AG04449 (cell line): ENCODE measurements at regions of chr17 and their contacts with region 1.

Region 1: DNA sequence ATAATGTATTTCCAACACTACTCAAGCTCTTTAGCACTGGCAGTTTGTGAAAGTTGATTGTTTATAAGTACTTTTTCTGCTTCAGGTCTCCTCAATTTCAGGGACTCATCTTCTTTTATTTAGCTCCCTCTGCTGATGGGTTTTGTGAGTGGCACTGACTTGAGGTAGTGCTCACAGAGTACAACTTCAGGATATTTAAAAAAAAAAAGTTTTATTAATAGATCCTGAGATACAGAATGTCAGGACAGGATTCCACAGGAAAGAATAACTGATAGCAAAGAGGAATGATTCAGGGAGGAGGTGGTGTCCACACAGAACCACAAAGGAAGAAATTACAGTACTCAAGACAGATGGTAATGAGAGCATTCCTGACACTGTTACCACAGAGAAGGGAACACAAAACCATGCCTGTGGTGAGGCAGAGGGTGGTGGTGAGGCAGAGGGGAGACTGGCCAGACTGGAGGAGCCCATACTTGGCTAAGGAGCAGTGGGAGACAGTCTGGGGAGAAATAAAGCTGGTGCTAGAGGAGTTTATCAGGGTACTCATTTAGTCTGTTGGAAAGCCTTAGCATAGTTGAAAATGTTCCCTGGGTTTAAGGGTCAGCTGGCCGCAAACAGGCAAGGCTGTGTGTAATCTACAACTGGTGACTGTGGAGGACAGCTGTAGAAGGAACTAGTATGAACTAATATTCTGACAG is 63.7 kb downstream of the SPAG9 start:
- DNase-seq: peak; percentile 91
- H3K4me3 ChIP-seq: no peak overlapping the region
- CTCF ChIP-seq: peak; percentile 49

Region 2: DNA sequence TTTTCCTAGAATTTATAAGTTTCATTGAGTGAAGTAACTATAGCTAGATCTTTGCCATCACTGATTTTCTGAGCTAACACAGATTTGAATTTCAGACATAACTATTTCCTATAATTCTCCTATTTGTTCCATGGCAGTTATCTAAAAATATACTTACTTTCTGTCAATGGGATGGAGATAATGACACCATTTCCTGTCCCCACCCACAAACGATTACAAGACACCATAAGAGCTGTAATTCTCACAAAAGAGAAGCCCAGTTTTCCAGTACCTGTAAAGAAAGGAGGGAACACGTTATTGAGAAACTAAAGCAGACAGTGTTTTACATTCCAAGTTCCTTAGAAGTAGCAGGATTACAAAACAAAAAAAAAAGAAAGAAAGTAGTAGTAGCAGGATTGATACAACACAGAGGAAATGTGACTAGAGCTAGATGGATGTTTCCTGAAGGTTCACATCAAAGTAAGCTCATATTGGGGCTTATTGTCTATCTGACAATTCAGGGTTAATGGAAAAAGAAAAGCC is 80.0 kb before region 1 on chr17:
- CTCF ChIA-PET with region 1: no interaction called
- POLR2A ChIA-PET with region 1: no interaction called
- DNase-seq: no peak
- H3K4me3 ChIP-seq: no peak overlapping the region
- CTCF ChIP-seq: no peak

Region 3: GRCh38 chr17:51029568-51030463 is 27.1 kb before region 1 on chr17:
- CTCF ChIA-PET with region 1: interaction called, 17 read pairs
- POLR2A ChIA-PET with region 1: interaction called, 3 read pairs
- DNase-seq: no peak
- H3K4me3 ChIP-seq: no peak overlapping the region
- CTCF ChIP-seq: no peak

Region 4: DNA sequence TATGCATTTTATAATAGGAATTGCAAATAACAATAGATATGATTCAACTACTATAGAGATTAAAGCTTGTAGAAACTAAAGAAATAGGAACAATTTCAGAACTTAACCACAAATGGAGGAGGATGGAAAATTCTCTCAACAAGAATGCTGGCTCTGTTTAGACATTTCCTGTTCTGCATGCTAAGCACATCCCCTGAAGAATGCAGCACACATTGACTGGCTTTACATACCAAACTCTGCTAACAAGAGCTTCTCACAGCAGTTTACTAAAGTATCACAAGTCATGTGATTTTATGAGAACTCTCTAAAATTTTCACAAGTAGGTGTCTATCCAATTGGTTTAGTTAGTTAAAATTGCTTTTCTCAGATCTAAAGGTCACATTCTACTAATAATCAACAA is 21.5 kb before region 1 on chr17:
- CTCF ChIA-PET with region 1: interaction called, 95 read pairs
- POLR2A ChIA-PET with region 1: interaction called, 3 read pairs
- DNase-seq: peak; percentile 92
- H3K4me3 ChIP-seq: no peak overlapping the region
- CTCF ChIP-seq: no peak

Region 5: DNA sequence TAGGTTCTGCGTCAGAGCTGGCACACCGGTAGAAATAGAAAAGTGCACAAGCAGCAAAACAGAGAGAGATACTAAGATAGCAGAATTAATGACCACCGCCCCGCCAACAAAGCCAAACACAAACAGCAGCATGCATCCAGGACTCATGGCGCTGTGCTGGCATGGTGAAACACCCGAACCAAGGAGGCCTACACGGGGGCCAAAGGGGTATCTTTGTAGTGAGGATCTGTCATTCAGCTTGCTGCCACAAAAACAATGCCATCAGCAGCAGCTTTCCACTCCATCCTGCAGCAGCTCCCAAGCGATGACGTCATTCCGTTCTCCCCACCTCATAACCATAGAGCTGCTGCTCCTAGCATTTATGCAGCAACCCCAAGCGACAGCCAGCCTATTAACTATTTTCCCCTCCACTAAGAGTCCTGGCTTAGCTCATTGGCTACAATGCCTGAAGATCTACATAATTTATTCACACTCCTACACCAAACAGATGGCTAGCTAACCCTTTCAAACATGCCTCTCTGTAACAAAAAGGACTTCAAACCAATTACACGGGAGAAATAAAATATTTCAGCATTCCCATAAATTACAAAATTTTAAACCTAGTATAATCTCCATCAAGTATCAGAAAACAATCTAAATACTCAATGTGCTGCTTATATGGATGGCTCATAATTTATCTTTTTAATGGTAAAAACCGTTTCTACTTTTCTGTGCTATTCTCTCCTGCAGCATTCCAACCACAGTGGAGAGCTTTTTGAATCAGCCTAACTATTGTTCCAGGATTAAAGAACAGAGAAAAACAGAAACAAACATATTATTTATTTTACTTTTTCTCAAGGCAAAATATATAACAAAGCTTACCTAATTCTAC is 10.2 kb before region 1 on chr17:
- CTCF ChIA-PET with region 1: interaction called, 95 read pairs
- POLR2A ChIA-PET with region 1: interaction called, 3 read pairs
- DNase-seq: peak; percentile 70
- H3K4me3 ChIP-seq: peak overlapping the region; percentile 49
- CTCF ChIP-seq: no peak